HEK293 (cell line): ENCODE measurements at regions of chr10 and their contacts with region 1.

Region 1: DNA sequence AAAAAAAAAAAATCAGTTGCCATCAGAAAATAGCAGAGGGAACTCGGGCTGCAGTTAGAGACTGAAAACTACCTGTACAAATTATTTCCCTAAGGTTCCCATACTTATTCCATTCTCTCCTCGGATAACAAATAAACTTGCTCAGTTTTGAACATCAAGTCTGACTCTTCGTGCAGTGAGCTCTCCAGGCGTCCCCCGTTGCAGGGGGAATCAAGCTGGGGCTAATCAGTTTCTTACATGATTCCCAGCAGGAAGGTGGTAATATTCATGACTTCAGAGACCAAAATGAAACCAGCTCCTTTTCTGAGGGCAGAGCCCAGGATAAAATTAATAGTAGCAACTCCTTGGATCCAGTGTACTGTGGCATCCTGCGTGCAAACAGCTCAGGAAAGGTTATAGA is 135.3 kb downstream of the FRMD4A start:
- H3K4me3 ChIP-seq: no peak overlapping the region
- H3K27ac ChIP-seq: no peak overlapping the region
- H3K4me1 ChIP-seq: no peaks in the 10 kb centered on the region
- CTCF ChIP-seq: no peak

Region 2: GRCh38 chr10:14211610-14212009 is 16.2 kb after region 1 on chr10:
- CTCF ChIA-PET with region 1: interaction called, 24 read pairs
- POLR2A ChIA-PET with region 1: no interaction called
- H3K4me3 ChIP-seq: no peak overlapping the region
- H3K27ac ChIP-seq: no peak overlapping the region
- H3K4me1 ChIP-seq: no peaks in the 10 kb centered on the region
- CTCF ChIP-seq: no peak

Region 3: GRCh38 chr10:14325325-14325955 is 130.0 kb after region 1 on chr10:
- CTCF ChIA-PET with region 1: interaction called, 16 read pairs
- POLR2A ChIA-PET with region 1: no interaction called
- H3K4me3 ChIP-seq: no peak overlapping the region
- H3K27ac ChIP-seq: no peak overlapping the region
- H3K4me1 ChIP-seq: 0 out of 2 replicates have a peak, but pooled peaks cover 3% of the 10 kb centered on the region
- CTCF ChIP-seq: no peak